Caco-2 (cell line): ENCODE measurements at regions of chr2 and their contacts with region 1.

Region 1: GRCh38 chr2:215418064-215418963 is 17.6 kb downstream of the FN1 start:
- DNase-seq: no peak
- H3K4me3 ChIP-seq: no peak overlapping the region
- H3K4me3 Mint-ChIP-seq: no peak overlapping the region
- H3K27ac Mint-ChIP-seq: peak overlapping the region; percentile 82
- H3K4me1 ChIP-seq: peaks cover 91% of the 10 kb centered on the region
- H3K4me1 Mint-ChIP-seq: peaks cover 49% of the 10 kb centered on the region
- H3K27me3 ChIP-seq: no peaks in the 10 kb centered on the region
- H3K27me3 Mint-ChIP-seq: no peaks in the 10 kb centered on the region
- CTCF ChIP-seq: no peak

Region 2: DNA sequence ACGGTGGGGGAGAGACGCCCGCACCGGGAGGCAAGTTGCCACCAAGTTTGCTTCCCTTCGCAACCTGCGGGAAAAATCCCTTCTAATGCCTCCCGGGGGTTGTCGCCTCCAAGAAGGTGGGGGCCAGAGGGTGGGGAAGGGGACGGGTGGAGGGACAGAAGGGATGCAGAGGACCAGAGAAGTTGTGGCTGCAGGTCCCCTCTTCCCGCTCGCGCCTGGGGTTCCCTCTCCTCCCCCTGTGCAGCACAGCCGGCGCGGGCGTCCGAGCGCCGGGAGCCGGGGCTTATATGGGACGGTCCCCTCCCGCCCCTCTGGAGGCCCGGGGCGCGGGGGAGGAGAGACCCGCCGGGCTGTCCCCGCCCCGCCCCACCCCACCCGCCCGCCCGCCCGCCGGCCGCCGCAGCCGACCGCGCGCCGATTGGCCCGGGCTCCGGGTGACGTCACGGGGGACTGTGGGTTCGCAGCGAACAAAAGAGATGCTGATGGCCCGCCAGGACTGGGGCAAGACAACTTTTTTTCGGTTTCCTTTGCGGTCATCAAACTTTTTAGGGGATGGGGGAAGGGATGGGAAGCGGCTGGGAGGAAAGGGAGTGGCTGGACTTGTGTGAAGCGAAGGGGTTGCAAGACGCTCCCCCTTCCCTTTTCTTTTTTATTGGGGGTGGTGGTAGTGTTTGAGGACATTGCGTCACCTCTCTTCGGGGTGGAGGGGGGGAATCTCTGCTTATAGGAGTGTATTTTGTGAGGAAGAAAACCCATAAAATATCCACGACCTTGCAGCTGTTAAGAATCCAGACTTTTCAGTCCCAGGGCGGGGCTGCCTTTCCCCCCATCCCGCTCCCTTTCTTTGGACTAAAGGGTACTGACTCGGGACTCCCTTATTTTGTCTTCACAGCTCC is 17.7 kb after region 1 on chr2 and contains the start of gene FN1:
- CTCF ChIA-PET with region 1: no interaction called
- POLR2A ChIA-PET with region 1: interaction called, 6 read pairs
- intact Hi-C with region 1: loop called (anchors 1 kb)
- DNase-seq: peak; percentile 95 to 96
- H3K4me3 ChIP-seq: peak within 1 kb of the TSS; percentile 99
- H3K4me3 Mint-ChIP-seq: peak within 1 kb of the TSS; percentile 84
- H3K27ac Mint-ChIP-seq: peak within 1 kb of the TSS; percentile 94
- H3K4me1 ChIP-seq: peaks cover 40% of the 10 kb centered on the region
- H3K4me1 Mint-ChIP-seq: peaks cover 26% of the 10 kb centered on the region
- H3K27me3 ChIP-seq: no peaks in the 10 kb centered on the region
- H3K27me3 Mint-ChIP-seq: no peaks in the 10 kb centered on the region
- CTCF ChIP-seq: no peak
- total RNA-seq, gene FN1: 3,805 and 3,872 TPM in 2 replicates

Region 3: GRCh38 chr2:215505044-215505786 is 86.9 kb after region 1 on chr2:
- CTCF ChIA-PET with region 1: no interaction called
- POLR2A ChIA-PET with region 1: no interaction called
- intact Hi-C with region 1: loop called (anchors 2 kb)
- DNase-seq: peak; percentile 68 to 70
- H3K4me3 ChIP-seq: no peak overlapping the region
- H3K4me3 Mint-ChIP-seq: peak overlapping the region; percentile 54
- H3K27ac Mint-ChIP-seq: peak overlapping the region; percentile 46
- H3K4me1 ChIP-seq: peaks cover 42% of the 10 kb centered on the region
- H3K4me1 Mint-ChIP-seq: peaks cover 38% of the 10 kb centered on the region
- H3K27me3 ChIP-seq: no peaks in the 10 kb centered on the region
- H3K27me3 Mint-ChIP-seq: no peaks in the 10 kb centered on the region
- CTCF ChIP-seq: no peak

Region 4: DNA sequence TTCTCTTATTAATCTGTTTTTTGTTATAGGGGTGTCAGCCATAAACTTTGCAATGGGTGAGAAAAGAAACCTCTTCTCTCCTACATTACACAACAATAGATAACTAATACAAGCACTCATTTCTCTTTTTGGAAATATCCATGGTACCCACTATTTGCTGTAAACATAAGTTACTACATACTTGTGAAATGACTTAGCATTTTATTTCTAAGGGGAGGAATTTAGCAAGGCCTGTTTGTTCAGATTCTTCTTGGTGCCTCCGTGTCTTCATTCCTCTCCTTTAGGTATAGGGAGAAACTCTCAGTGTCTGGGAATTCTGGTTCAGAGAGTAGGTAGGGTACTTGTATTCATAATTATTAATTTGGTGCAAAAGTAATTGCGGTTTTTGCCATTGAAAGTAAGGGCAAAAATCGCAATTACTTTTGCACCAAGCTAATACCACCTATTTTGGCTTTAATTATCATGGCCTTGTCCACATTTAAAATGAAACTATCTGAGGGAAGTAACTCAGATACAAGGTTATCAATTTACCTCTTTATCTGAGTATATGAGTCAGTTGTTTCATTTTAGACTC is 460.3 kb after region 1 on chr2:
- CTCF ChIA-PET with region 1: no interaction called
- POLR2A ChIA-PET with region 1: no interaction called
- intact Hi-C with region 1: loop called (anchors 5 kb)
- DNase-seq: peak in 1 of 2 experiments; percentile 39
- H3K4me3 ChIP-seq: no peak overlapping the region
- H3K4me3 Mint-ChIP-seq: no peak overlapping the region
- H3K27ac Mint-ChIP-seq: peak overlapping the region; percentile 74
- H3K4me1 ChIP-seq: peaks cover 40% of the 10 kb centered on the region
- H3K4me1 Mint-ChIP-seq: peaks cover 28% of the 10 kb centered on the region
- H3K27me3 ChIP-seq: no peaks in the 10 kb centered on the region
- H3K27me3 Mint-ChIP-seq: no peaks in the 10 kb centered on the region
- CTCF ChIP-seq: no peak